ENCODE measurements at regions of chr19 and their contacts with region 1.

Region 1: DNA sequence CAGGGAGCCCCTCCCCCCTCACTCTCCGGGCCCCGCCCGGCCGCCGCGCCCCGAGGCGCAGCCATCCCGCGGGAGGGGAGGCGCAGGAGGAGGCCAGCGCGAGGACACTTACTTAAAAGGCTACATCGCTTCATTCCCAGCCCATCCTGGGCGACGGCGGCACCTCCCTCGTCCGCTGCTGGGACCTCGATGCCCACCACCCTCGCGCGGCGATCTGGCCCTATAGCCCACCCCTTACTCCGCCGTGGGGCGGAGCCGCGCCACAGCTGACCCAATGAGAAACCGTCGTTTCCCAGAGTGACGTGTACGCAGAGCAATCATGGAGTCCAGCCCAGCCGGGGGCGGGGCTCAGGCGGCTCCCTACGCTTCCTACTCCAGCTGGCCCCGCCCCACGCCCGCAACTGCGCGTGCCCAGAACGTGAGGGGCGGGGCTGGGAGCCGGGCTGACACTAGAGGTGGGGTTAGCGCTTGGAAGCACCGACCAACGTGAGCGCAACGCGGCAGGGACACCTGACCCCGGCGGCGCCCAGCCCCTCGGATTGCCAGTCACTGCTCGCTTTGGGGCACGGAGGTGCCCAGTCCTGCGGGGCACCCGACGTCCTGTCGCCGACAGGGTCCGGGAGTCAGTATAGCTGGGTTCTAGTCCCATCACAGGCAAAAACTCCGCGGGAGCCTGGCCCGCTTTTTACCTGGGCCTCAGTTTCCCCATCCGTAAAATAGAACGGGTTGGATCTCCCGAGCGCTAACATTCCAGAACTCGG is at the start of gene ANKRD27:
- DNase-seq: peak; percentile 98 to 99
- H3K4me3 ChIP-seq: peak within 1 kb of the TSS; percentile 81 to 82
- H3K27ac ChIP-seq: peak within 1 kb of the TSS; percentile 79 to 80
- H3K4me1 ChIP-seq: peaks cover 0 to 33% (median 25%) of the 10 kb centered on the region in 4 donors
- H3K27me3 ChIP-seq: peaks cover 0 to 31% of the 10 kb centered on the region in 2 donors
- CTCF ChIP-seq: no peak

Region 2: GRCh38 chr19:32345261-32346207 is 329.6 kb before region 1 on chr19 and contains the start of gene ZNF507:
- intact Hi-C with region 1: loop called (anchors 10 kb)
- DNase-seq: peak; percentile 72 to 85
- H3K4me3 ChIP-seq: peak within 1 kb of the TSS; percentile 96 to 97
- H3K27ac ChIP-seq: peak within 1 kb of the TSS; percentile 75 to 92
- H3K4me1 ChIP-seq: peaks cover 0 to 43% (median 22%) of the 10 kb centered on the region in 4 donors
- H3K27me3 ChIP-seq: no peaks in the 10 kb centered on the region
- CTCF ChIP-seq: no peak

Region 3: GRCh38 chr19:32550666-32551065 is 124.5 kb before region 1 on chr19:
- intact Hi-C with region 1: no loop called
- DNase-seq: no peak
- H3K4me3 ChIP-seq: no peak overlapping the region
- H3K27ac ChIP-seq: no peak overlapping the region
- H3K4me1 ChIP-seq: no peaks in the 10 kb centered on the region
- H3K27me3 ChIP-seq: no peaks in the 10 kb centered on the region
- CTCF ChIP-seq: no peak

Region 4: DNA sequence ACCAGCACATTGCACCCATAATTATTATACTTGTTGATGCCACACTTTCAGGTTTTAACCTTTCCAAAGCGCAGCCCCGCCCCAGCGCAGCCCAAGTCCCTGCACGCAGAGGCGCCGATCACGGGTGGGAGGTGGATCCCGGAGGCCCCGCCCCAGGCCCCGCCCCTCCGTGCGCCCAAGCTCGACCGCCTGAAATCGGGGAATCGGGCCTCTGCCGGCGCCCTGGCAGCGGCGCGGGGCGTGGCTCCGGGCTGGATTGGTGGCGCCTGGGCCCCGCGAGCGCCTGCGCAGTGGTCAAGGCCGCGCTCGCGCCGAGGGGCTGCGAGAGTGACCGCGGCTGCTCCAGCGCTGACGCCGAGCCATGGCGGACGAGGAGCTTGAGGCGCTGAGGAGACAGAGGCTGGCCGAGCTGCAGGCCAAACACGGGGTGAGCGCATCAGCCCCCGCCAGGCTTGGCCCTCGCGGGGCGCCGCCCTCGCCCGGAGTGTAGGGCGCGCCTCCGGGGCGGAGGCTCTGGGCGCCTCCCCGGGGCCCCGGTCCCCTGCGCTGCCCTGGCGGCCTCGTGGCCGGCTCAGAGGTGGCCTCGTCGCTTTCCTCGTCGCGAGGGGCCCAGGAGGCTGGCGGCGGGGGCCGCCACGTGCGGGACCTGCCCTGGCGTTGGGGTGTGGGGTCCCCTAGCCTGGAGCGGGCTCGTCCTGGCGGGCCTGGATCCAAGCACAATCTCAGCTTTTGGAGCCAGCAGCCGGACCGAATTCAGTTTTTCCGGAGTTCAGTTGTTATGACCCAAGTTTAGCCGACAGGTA is 94.0 kb before region 1 on chr19 and contains the start of gene PDCD5:
- intact Hi-C with region 1: loop called (anchors 10 kb)
- DNase-seq: peak; percentile 95 to 98
- H3K4me3 ChIP-seq: peak within 1 kb of the TSS; percentile 96 to 100
- H3K27ac ChIP-seq: peak within 1 kb of the TSS; percentile 90 to 91
- H3K4me1 ChIP-seq: peaks cover 0 to 13% (median 9%) of the 10 kb centered on the region in 4 donors
- H3K27me3 ChIP-seq: no peaks in the 10 kb centered on the region
- CTCF ChIP-seq: no peak

Region 5: DNA sequence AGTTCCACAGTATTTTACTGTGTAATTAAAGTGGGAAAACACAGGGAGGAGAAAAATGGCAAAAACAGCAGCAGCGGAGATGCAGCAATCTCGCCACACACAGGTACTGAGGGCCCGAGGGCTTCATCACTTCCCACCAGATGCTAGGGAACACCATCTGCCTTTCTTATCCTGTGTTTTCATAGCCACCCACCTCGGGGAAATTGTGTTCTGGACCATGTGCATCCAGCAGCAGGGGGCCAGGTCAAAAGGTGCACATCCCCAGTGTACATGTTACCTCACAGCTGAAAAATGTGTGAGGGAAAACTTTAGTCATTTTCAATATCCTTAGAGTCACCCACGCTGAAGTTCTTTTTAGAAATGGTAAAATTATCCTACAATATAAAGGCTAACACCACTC is 64.0 kb before region 1 on chr19:
- intact Hi-C with region 1: no loop called
- DNase-seq: no peak
- H3K4me3 ChIP-seq: no peak overlapping the region
- H3K27ac ChIP-seq: no peak overlapping the region
- H3K4me1 ChIP-seq: no peaks in the 10 kb centered on the region
- H3K27me3 ChIP-seq: no peaks in the 10 kb centered on the region
- CTCF ChIP-seq: no peak

Region 6: GRCh38 chr19:32708457-32708856 is 33.3 kb after region 1 on chr19:
- intact Hi-C with region 1: no loop called
- DNase-seq: no peak
- H3K4me3 ChIP-seq: no peak overlapping the region
- H3K27ac ChIP-seq: no peak overlapping the region
- H3K4me1 ChIP-seq: no peaks in the 10 kb centered on the region
- H3K27me3 ChIP-seq: no peaks in the 10 kb centered on the region
- CTCF ChIP-seq: no peak

Measured in tibial artery (tissue), 4 donors.